ENCODE measurements at regions of chr1 and their contacts with region 1.

Region 1: DNA sequence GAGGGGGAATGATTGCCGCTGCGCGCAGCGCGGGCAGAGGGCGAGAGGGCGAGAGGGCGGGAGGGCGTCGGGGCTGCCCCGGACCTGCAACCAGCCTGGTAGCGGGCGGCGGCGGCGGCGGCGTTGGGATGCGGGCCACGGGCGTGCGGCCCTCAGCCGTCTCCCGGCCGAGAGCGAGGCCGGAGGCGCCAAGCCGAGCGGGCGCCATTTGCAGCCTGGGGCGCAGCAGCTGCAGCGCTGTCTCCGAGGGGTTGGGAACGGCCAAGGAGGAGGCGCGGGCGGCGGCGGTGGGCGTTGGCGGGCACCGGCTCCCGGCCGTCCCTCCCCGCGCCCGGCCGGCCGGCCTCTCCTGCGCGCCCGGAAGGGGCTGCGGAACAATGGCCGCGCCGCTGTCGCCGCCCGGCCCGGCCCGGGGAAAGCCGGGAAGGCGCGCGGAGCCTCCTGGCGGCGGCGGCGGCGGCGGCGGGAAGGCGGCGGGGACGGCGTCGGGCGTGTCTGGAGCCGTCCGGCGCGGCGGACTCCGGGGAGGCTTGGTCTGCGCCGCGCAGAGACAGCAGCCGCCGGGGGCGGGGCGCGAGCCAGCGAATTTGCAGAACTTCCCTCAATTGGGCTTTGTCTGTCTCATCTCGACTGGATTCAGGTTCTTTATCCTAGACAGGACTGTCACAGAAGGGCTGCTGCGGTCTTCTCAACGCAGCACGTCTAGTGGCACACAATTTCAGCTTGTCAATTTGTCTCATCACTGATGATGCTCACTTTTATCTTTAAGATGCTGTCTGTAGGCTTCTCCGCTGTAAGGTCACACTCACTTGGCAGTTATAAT is 35.7 kb downstream of the ZBTB8B start:
- DNase-seq: peak; percentile 30
- H3K4me3 Mint-ChIP-seq: peak overlapping the region; percentile 77
- H3K27ac Mint-ChIP-seq: no peak overlapping the region
- H3K4me1 Mint-ChIP-seq: peaks cover 5% of the 10 kb centered on the region
- H3K27me3 Mint-ChIP-seq: peaks cover 36% of the 10 kb centered on the region

Region 2: DNA sequence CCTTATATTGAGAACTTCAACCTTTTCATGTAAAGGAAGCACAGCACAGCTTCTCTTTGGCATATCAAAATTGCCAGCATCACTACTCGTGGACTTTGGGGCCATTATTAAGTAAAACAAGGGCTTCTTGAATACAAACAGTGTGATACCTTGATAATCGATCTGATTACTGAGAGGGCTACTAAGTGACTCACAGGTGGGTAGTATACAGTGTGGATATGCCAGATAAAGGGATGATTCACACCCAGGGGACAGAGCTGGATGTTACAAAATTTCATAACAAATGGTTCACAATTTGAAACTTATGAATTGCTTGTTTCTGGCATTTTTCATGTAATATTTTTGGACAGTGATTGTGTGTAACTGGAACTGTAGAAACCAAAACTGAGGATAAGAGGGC is 193.3 kb before region 1 on chr1:
- CTCF ChIA-PET with region 1: no interaction called
- intact Hi-C with region 1: no loop called
- DNase-seq: no peak
- H3K4me3 Mint-ChIP-seq: no peak overlapping the region
- H3K27ac Mint-ChIP-seq: peak overlapping the region; percentile 24
- H3K4me1 Mint-ChIP-seq: peaks cover 62% of the 10 kb centered on the region
- H3K27me3 Mint-ChIP-seq: no peaks in the 10 kb centered on the region

Region 3: GRCh38 chr1:32464716-32465577 is 35.7 kb before region 1 on chr1 and contains the start of gene ZBTB8B:
- CTCF ChIA-PET with region 1: no interaction called
- intact Hi-C with region 1: loop called (anchors 5 kb)
- DNase-seq: peak; percentile 48
- H3K4me3 Mint-ChIP-seq: peak within 1 kb of the TSS; percentile 54
- H3K27ac Mint-ChIP-seq: no peak within 1 kb of the TSS
- H3K4me1 Mint-ChIP-seq: peaks cover 13% of the 10 kb centered on the region
- H3K27me3 Mint-ChIP-seq: peaks cover 36% of the 10 kb centered on the region
- total RNA-seq, gene ZBTB8B: not detected

Region 4: GRCh38 chr1:32538887-32539583 is 38.4 kb after region 1 on chr1 and contains the start of gene ZBTB8A:
- CTCF ChIA-PET with region 1: interaction called, 3 read pairs
- intact Hi-C with region 1: loop called (anchors 5 kb)
- DNase-seq: peak; percentile 21
- H3K4me3 Mint-ChIP-seq: peak within 1 kb of the TSS; percentile 77
- H3K27ac Mint-ChIP-seq: no peak within 1 kb of the TSS
- H3K4me1 Mint-ChIP-seq: peaks cover 8% of the 10 kb centered on the region
- H3K27me3 Mint-ChIP-seq: peaks cover 64% of the 10 kb centered on the region
- total RNA-seq, gene ZBTB8A: 0.21 to 0.35 TPM

Region 5: DNA sequence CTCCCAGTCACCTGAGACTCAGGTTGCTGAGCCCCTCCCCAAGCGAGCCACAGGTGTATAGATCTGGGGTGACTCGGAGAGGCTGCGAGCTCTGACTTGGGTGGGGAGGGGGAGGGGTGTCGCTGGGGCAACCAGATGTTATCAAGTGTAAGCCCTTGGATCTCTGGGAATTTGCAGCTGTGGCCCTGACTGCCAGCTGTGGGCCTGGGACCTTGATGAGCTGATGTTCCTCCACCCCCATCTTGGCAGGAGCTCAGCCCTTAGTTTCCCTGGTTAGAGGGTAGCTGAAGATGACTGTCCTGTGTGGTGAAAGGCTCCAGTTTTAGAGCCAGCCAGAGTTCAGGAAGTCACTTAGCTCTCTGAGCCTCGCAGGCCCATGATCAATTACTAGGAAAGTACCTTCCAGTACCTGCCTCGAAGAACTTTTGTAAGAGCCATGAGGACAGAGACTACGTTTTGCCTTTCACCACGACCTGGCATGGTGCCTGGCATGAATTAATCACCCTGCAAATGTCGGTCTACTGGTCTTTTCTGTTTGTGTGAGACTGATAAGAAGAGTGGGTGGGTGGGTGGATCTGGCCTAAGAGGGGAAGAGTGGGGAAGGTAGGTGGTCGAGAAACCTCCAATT is 260.8 kb after region 1 on chr1:
- CTCF ChIA-PET with region 1: no interaction called
- intact Hi-C with region 1: no loop called
- DNase-seq: peak; percentile 73
- H3K4me3 Mint-ChIP-seq: no peak overlapping the region
- H3K27ac Mint-ChIP-seq: peak overlapping the region; percentile 53
- H3K4me1 Mint-ChIP-seq: peaks cover 26% of the 10 kb centered on the region
- H3K27me3 Mint-ChIP-seq: no peaks in the 10 kb centered on the region